OCI-LY7 (cell line): ENCODE measurements at regions of chr3 and their contacts with region 1.

Region 1: DNA sequence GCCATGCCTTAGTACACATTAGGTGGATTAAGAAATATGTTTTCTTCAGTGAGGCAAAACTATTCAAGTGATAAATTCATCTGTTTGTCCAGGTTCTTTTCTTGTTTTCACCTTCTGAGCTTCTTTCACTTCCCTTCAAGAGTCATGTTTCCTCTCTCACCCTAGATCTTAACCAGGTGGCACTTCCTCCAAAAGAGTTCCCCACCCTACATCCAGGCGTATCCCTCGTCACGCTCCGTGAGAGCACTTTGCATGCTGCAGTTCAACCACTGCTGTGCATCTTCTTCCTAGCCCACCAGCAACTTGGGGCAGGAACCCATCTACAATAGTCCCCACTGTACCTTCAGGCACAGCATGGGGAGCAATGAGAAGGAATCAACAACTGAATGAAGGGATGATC is 28.9 kb downstream of the OSBPL10 start:
- DNase-seq: peak; percentile 99
- H3K4me3 ChIP-seq: peak overlapping the region; percentile 57
- H3K27ac ChIP-seq: peak overlapping the region; percentile 100
- H3K4me1 ChIP-seq: peaks cover 87% of the 10 kb centered on the region
- CTCF ChIP-seq: no peak

Region 2: GRCh38 chr3:31858439-31858838 is 93.8 kb before region 1 on chr3:
- CTCF ChIA-PET with region 1: no interaction called
- POLR2A ChIA-PET with region 1: interaction called, 3 read pairs
- intact Hi-C with region 1: loop called (anchors 2 kb)
- DNase-seq: peak; percentile 74
- H3K4me3 ChIP-seq: no peak overlapping the region
- H3K27ac ChIP-seq: peak overlapping the region; percentile 53
- H3K4me1 ChIP-seq: peaks cover 95% of the 10 kb centered on the region
- CTCF ChIP-seq: peak; percentile 72

Region 3: DNA sequence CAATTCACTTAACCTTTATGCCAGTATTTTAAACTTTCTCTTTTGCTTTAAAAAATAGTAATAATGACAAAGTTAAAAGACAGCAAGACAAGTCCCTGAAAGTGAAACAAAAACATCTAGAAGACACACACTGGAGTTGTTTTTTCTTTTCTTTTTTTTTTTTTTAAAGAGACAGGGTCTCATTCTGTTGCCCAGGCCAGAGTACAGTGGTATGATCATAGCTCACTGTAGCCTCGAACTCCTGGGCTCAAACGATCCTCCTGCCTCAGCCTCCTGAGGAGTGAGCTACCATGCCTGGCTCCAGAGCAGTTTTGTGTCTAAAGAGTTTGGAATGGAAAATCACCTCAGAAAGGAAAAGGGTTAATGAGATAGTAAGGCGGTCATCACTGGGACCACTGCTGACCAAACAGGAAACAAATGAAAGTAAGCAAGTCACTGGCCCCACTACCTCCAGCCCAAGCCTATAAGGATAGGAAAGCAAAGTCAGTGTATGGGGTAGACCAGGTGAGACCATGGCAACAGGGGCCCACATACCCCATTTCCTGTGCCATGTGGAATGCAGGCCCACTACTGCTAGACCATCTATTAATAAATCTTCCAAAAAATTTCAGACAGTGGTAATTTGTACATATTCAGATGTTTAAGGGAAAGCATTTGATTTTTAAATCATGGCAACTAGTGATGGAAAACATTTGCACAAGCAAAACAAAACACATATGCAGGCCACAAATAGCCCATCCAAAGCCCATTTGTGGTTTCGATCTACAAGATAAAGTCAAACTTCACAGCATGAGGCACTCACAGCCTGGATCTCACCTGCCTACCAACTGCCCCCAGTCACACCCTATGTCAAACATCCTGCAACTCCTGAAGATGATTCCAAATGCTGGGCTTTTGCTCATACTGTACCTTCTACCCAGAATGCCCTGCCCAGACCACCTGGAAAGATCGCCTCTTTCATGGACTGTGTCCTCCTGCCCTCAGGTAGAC is 33.7 kb before region 1 on chr3:
- CTCF ChIA-PET with region 1: no interaction called
- POLR2A ChIA-PET with region 1: interaction called, 12 read pairs
- intact Hi-C with region 1: loop called (anchors 2 kb)
- DNase-seq: peak; percentile 65
- H3K4me3 ChIP-seq: peak overlapping the region; percentile 64
- H3K27ac ChIP-seq: peak overlapping the region; percentile 100
- H3K4me1 ChIP-seq: peaks cover 99% of the 10 kb centered on the region
- CTCF ChIP-seq: no peak

Region 4: DNA sequence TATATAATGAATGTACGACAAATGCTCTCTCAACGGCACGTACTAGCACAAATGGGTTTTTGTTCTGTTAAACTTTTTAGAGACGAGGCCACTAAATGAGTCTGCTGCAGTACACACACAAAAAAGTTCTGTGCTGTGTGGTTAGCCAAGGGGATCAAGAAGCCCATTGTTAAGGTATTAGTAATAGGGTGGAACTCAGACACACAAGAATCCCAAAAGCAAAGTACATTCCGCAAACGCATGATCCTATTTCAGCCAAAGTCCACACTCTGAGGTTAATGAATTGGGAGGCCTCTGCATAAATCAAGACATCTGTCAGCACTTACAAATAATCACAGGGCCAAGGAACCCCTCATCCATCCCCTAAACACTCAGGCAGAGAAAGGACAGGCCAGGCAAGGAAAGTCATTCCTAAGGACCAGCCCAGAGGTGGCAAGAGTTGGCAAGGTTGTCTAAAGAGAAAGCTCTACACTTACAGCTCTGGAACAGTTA is 16.8 kb after region 1 on chr3:
- CTCF ChIA-PET with region 1: interaction called, 5 read pairs
- POLR2A ChIA-PET with region 1: interaction called, 57 read pairs
- intact Hi-C with region 1: loop called (anchors 1 kb)
- DNase-seq: no peak
- H3K4me3 ChIP-seq: peak overlapping the region; percentile 91
- H3K27ac ChIP-seq: peak overlapping the region; percentile 88
- H3K4me1 ChIP-seq: peaks cover 88% of the 10 kb centered on the region
- CTCF ChIP-seq: no peak

Region 5: GRCh38 chr3:32026593-32026992 is 74.4 kb after region 1 on chr3:
- CTCF ChIA-PET with region 1: no interaction called
- POLR2A ChIA-PET with region 1: interaction called, 22 read pairs
- intact Hi-C with region 1: loop called (anchors 2 kb)
- DNase-seq: peak; percentile 98
- H3K4me3 ChIP-seq: peak overlapping the region; percentile 42
- H3K27ac ChIP-seq: peak overlapping the region; percentile 100
- H3K4me1 ChIP-seq: peaks cover 61% of the 10 kb centered on the region
- CTCF ChIP-seq: no peak

Region 6: DNA sequence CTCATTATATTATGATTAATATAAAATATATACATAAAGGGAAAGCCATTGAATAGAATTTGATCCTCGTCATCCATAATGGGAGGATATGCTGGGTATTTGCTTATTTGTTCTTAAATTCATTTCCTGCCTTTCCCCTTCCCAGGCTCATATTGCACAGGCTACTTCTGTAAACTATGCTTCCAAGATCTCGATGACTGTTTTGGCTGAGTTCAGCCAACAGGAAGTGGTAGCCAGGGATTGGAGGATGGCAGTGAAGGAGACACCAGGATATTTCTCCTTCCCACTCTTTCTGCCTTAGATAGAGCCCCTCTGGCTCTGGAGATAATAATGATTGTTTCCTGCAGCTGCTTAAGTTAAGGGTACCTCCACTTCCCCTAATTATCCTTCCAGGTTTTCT is 662.8 kb after region 1 on chr3:
- CTCF ChIA-PET with region 1: no interaction called
- POLR2A ChIA-PET with region 1: no interaction called
- intact Hi-C with region 1: no loop called
- DNase-seq: no peak
- H3K4me3 ChIP-seq: no peak overlapping the region
- H3K27ac ChIP-seq: no peak overlapping the region
- H3K4me1 ChIP-seq: no peaks in the 10 kb centered on the region
- CTCF ChIP-seq: no peak